ENCODE measurements at regions of chr4 and their contacts with region 1.

Region 1: GRCh38 chr4:141074098-141074878 is 59.0 kb downstream of the RNF150 start:
- DNase-seq: no peak
- ATAC-seq: no peak
- H3K4me3 ChIP-seq: no peak overlapping the region
- H3K27ac ChIP-seq: no peak overlapping the region
- H3K4me1 ChIP-seq: no peaks in the 10 kb centered on the region
- H3K27me3 ChIP-seq: no peaks in the 10 kb centered on the region
- CTCF ChIP-seq: no peak

Region 2: DNA sequence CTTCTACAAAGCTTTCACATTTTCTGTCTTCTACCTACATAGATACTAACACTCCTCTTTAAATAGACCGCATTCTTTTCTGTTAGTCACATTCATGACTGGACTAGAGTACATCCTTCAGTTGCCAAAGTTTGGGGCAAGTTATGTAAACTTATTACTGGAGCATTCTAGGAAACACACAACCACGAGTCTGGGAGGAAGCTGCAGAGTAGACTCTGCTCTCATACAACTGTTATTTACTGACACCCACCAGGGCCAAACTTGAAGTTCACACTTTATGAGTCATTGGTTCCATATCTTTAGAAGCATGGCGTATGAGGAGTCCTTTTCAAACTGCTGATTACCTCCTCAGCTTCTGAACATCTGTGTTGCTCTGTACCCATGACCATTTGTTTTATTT is 28.0 kb before region 1 on chr4:
- CTCF ChIA-PET with region 1: no interaction called
- POLR2A ChIA-PET with region 1: no interaction called
- in situ Hi-C with region 1: no loop called
- intact Hi-C with region 1: no loop called
- DNase-seq: no peak
- ATAC-seq: no peak
- H3K4me3 ChIP-seq: no peak overlapping the region
- H3K27ac ChIP-seq: no peak overlapping the region
- H3K4me1 ChIP-seq: no peaks in the 10 kb centered on the region
- H3K27me3 ChIP-seq: no peaks in the 10 kb centered on the region
- CTCF ChIP-seq: no peak

Region 3: DNA sequence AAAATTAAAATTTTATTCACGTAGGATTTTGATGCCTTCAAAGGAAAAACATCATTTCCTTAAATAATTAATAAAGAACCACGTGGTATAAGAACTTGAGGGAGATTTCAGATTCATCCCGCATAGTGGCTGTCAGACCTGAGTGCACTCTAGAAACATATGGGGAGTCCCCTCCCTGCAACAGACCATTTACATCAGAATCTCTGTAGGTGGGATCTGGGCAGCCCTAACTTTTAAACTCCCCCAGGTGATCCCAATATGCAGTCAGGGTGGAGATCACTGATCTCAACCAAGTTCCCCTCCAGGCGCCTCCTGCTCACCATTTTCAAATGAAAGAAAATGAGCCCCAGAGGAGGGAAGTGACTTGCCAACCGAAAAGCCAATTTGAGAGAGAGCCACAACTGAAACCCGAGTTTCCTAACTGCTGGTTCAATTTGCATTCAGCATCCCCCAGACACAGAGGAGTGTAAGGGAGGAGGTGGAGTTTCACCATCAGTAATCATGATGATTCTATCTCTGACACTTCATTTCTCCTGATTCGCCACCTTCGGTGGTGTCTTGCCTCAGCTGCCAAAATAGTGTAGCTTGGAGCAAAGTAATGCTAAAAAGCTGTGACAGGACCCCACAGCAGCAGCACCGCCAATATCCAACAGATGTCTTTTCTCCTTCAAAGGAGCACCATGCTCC is 47.6 kb after region 1 on chr4:
- CTCF ChIA-PET with region 1: no interaction called
- POLR2A ChIA-PET with region 1: no interaction called
- in situ Hi-C with region 1: no loop called
- intact Hi-C with region 1: no loop called
- DNase-seq: no peak
- ATAC-seq: no peak
- H3K4me3 ChIP-seq: no peak overlapping the region
- H3K27ac ChIP-seq: no peak overlapping the region
- H3K4me1 ChIP-seq: no peaks in the 10 kb centered on the region
- H3K27me3 ChIP-seq: no peaks in the 10 kb centered on the region; the same call in 1 of the 2 replicates
- CTCF ChIP-seq: no peak

Region 4: GRCh38 chr4:141174457-141174856 is 100.2 kb after region 1 on chr4:
- CTCF ChIA-PET with region 1: no interaction called
- POLR2A ChIA-PET with region 1: interaction called, 10 read pairs
- in situ Hi-C with region 1: no loop called
- intact Hi-C with region 1: no loop called
- DNase-seq: no peak
- ATAC-seq: no peak
- H3K4me3 ChIP-seq: no peak overlapping the region
- H3K27ac ChIP-seq: no peak overlapping the region
- H3K4me1 ChIP-seq: no peaks in the 10 kb centered on the region
- H3K27me3 ChIP-seq: no peaks in the 10 kb centered on the region
- CTCF ChIP-seq: no peak

Region 5: GRCh38 chr4:141534985-141535384 is 460.7 kb after region 1 on chr4:
- CTCF ChIA-PET with region 1: no interaction called
- POLR2A ChIA-PET with region 1: no interaction called
- in situ Hi-C with region 1: no loop called
- intact Hi-C with region 1: no loop called
- DNase-seq: no peak
- ATAC-seq: no peak
- H3K4me3 ChIP-seq: no peak overlapping the region
- H3K27ac ChIP-seq: no peak overlapping the region
- H3K4me1 ChIP-seq: no peaks in the 10 kb centered on the region
- H3K27me3 ChIP-seq: no peaks in the 10 kb centered on the region
- CTCF ChIP-seq: no peak

Region 6: GRCh38 chr4:142098900-142099545 is 1024.7 kb after region 1 on chr4:
- CTCF ChIA-PET with region 1: no interaction called
- POLR2A ChIA-PET with region 1: no interaction called
- in situ Hi-C with region 1: no loop called
- intact Hi-C with region 1: no loop called
- DNase-seq: no peak
- ATAC-seq: no peak
- H3K4me3 ChIP-seq: no peak overlapping the region
- H3K27ac ChIP-seq: no peak overlapping the region
- H3K4me1 ChIP-seq: no peaks in the 10 kb centered on the region
- H3K27me3 ChIP-seq: no peaks in the 10 kb centered on the region
- CTCF ChIP-seq: no peak